Calu3 (cell line): ENCODE measurements at regions of chr18 and their contacts with region 1.

Region 1: GRCh38 chr18:13315000-13315399 is 96.4 kb downstream of the LDLRAD4 start:
- DNase-seq: no peak
- H3K4me3 Mint-ChIP-seq: no peak overlapping the region
- H3K27ac Mint-ChIP-seq: no peak overlapping the region
- H3K4me1 Mint-ChIP-seq: no peaks in the 10 kb centered on the region
- H3K27me3 Mint-ChIP-seq: no peaks in the 10 kb centered on the region
- CTCF ChIP-seq: no peak

Region 2: DNA sequence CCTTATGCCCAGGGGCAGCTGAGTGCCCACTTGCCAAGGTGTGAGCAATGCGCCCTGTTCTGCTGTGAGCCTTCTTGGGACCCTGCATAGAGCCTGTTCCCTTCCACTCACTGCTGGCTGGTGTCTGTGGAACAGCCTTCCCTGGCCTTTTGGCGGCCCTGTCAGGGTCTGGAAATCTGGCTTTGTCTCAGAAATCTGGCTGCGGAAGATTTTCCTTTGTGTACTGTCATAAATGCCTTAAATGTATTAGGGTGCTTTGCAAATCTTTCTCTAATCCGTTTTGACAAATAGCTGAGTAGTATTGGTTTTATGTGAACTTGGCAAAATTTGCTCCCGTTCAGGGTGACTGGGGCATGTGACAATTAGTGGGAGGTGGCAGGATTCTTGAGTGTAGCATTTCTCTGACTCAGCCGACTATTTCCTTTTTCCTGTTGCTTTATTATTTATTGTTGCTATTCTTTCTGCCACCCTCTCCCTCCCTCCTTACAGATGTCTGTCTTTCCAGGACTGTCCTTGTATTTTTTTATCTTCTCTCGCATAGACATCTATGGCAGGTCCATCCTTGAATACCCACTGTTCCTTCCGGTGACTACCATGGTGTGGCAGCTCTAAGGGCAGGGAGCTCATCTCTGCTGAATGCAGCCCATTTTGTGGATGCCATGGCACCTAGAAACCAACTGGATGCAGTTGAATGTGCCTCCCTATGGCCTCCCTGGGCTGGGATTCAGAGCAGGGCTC is 54.6 kb before region 1 on chr18:
- CTCF ChIA-PET with region 1: no interaction called
- intact Hi-C with region 1: no loop called
- DNase-seq: peak; percentile 14
- H3K4me3 Mint-ChIP-seq: no peak overlapping the region
- H3K27ac Mint-ChIP-seq: no peak overlapping the region
- H3K4me1 Mint-ChIP-seq: peaks cover 9% of the 10 kb centered on the region
- H3K27me3 Mint-ChIP-seq: peaks cover 64% of the 10 kb centered on the region
- CTCF ChIP-seq: no peak

Region 3: DNA sequence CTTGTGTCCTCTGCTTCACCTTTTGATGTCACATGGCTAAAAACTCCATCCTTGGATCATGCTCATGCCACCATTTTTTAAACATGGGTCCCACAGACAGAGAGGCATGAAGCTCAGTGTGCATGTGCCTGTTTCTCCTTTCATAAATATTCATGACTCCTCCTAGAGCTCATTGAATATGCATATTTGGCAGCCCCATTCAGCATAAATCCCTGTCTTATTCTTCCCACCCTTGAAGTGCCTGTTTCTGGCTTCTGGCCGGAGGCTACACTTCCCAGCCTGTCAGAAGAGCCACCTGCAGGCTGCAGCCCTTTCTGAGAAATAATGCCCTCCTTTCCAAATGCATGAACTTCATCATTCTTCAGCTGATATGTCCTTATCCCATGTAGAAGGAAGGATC is 13.2 kb after region 1 on chr18:
- CTCF ChIA-PET with region 1: no interaction called
- intact Hi-C with region 1: loop called (anchors 1 kb)
- DNase-seq: no peak
- H3K4me3 Mint-ChIP-seq: no peak overlapping the region
- H3K27ac Mint-ChIP-seq: no peak overlapping the region
- H3K4me1 Mint-ChIP-seq: no peaks in the 10 kb centered on the region
- H3K27me3 Mint-ChIP-seq: peaks cover 40% of the 10 kb centered on the region
- CTCF ChIP-seq: no peak